ENCODE measurements at regions of chr13 and their contacts with region 1.

Region 1: DNA sequence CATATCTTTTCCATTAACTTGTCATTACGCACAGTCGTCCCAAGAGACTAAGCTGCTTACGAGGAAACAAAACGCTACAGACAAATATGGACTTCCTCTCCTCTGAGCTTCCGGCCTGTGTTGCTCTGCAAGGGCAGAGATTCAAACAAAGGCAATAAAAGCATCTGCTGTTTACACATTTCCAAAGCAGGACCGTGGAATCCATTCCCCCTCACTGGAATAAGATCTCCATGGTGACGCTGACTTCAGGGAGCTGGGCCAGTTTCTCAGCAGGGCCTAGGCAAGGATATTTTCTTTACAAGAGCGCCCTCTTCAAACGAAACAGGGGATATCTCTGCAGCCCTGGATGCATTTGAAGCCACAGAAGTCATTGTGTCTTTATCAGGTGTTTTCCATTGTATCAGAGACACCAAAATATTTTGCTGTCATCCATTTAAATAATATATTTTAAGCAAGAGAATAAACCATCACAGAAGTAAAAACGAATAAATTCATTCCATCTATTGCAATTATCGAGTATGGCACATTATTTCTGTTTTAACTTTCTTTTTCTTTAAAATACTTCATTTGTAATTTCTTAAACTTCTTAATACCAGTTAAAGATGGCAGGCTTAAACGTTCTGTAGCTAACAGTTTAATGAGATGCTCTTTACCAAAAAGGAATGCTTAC is 177.5 kb downstream of the DCLK1 start:
- DNase-seq: peak; percentile 54 to 65
- H3K4me3 ChIP-seq: no peak overlapping the region
- H3K27ac ChIP-seq: no peak overlapping the region
- H3K4me1 ChIP-seq: peaks cover 0 to 3% (median under 1%) of the 10 kb centered on the region in 4 experiments; a peak in 1 of 7 replicates
- H3K27me3 ChIP-seq: no peaks in the 10 kb centered on the region
- CTCF ChIP-seq: peak; percentile 10 to 84 (median 82)
- EP300 ChIP-seq: no peak
- POLR2A ChIP-seq: no peak
- RAD21 ChIP-seq: peak; percentile 94 to 96

Region 2: DNA sequence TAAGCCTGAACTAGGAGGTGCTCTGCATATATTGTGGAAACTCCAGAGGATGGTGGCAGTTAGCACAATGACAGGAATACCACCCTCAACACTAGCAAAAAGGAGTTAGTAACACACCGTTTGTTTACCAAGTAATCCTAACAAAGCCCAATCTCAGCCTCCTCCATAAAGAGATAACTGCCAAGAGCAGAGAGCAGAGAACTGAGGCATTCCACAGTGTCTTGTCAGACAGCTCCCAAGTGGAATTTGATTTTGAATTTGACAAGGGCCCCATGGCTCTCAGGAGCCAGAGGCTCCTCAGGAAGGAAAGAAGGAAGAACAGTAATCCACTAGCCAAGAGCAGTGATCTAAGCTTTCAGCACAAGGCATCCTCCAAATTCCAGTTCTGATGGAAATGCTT is 121.1 kb before region 1 on chr13:
- CTCF ChIA-PET with region 1: interaction called, 10 read pairs
- POLR2A ChIA-PET with region 1: no interaction called
- DNase-seq: no peak
- H3K4me3 ChIP-seq: no peak overlapping the region
- H3K27ac ChIP-seq: no peak overlapping the region
- H3K4me1 ChIP-seq: no peaks in the 10 kb centered on the region; a peak in 1 of 7 replicates
- H3K27me3 ChIP-seq: no peaks in the 10 kb centered on the region
- CTCF ChIP-seq: no peak
- EP300 ChIP-seq: no peak
- POLR2A ChIP-seq: no peak
- RAD21 ChIP-seq: no peak

Region 3: DNA sequence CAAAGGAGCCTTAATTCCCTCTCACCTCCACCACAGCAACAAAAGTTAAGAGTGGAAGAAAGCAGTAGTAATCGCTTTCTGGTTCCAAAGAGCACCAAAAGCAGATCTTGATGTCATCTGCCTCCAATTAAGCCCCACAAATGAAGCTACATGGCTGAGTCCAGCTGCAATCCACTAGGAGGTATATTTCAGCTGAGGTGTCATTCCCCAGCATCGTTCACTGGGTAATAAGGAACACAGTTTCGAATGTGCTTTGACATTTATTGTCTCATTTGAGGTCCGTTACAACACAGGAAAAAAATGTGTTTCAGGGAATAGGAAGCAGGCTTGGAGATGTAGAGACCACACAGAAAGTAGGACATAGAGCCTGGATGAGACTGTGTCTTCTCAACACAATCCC is 12.9 kb before region 1 on chr13:
- CTCF ChIA-PET with region 1: interaction called, 17 read pairs
- POLR2A ChIA-PET with region 1: no interaction called
- DNase-seq: no peak
- H3K4me3 ChIP-seq: no peak overlapping the region
- H3K27ac ChIP-seq: no peak overlapping the region
- H3K4me1 ChIP-seq: no peaks in the 10 kb centered on the region
- H3K27me3 ChIP-seq: no peaks in the 10 kb centered on the region
- CTCF ChIP-seq: no peak
- EP300 ChIP-seq: no peak
- POLR2A ChIP-seq: no peak
- RAD21 ChIP-seq: no peak